ENCODE measurements at regions of chr3 and their contacts with region 1.

Region 1: DNA sequence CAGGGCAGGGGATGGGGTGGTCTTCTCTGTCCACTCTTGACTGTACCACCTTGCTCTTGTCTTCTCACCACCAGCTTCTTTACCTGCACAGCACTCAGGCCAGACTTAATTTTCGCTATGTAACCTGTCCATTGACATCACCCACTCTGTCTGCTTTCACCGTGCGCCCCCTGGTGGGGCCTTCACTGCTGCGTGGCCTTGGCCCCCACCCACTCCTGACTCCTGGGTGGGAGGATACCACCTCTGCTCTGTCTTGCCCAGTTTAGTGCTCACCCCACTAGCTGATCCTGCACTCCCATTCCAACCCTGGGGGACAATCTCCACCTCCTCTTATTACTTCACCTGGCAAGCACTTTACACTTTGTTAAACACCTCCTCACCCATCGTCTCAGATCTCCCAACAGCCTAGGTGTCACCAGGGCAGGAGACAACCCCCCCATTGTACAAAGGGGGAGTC is 17.7 kb downstream of the PTH1R start:
- DNase-seq: peak; percentile 84 to 86 (median 85)
- ATAC-seq: peak; percentile 92
- H3K4me3 ChIP-seq: no peak overlapping the region
- H3K27ac ChIP-seq: no peak overlapping the region
- H3K4me1 ChIP-seq: peaks cover 0 to 37% of the 10 kb centered on the region in 2 experiments; a peak in 3 of 5 replicates
- H3K27me3 ChIP-seq: peaks cover 20 to 62% of the 10 kb centered on the region in 2 experiments; a peak in 4 of 5 replicates
- CTCF ChIP-seq: peak; percentile 91 to 99 (median 93)
- EP300 ChIP-seq: no peak
- POLR2A ChIP-seq: no peak
- RAD21 ChIP-seq: peak; percentile 79 to 97

Region 2: GRCh38 chr3:46717447-46718231 is 177.6 kb before region 1 on chr3 and contains the start of gene PRSS50:
- CTCF ChIA-PET with region 1: interaction called, 3 read pairs
- POLR2A ChIA-PET with region 1: interaction called, 3 read pairs
- in situ Hi-C with region 1: loop called (anchors 5 kb)
- intact Hi-C with region 1: no loop called
- DNase-seq: peak; percentile 62 to 93 (median 87)
- ATAC-seq: peak; percentile 98
- H3K4me3 ChIP-seq: no peak within 1 kb of the TSS
- H3K27ac ChIP-seq: no peak within 1 kb of the TSS
- H3K4me1 ChIP-seq: peaks cover 0 to 10% of the 10 kb centered on the region in 2 experiments; a peak in 1 of 5 replicates
- H3K27me3 ChIP-seq: peaks cover 15 to 66% of the 10 kb centered on the region in 2 experiments
- CTCF ChIP-seq: peak; percentile 90 to 100 (median 99)
- EP300 ChIP-seq: no peak
- POLR2A ChIP-seq: no peak
- RAD21 ChIP-seq: peak in 1 of 2 experiments; percentile 51; a peak in 2 of 4 replicates
- polyA plus RNA-seq, gene PRSS50: 0.01 TPM in 1 of 2 experiments, not detected in the other

Region 3: GRCh38 chr3:46845791-46846623 is 49.2 kb before region 1 on chr3:
- CTCF ChIA-PET with region 1: interaction called, 3 read pairs
- POLR2A ChIA-PET with region 1: no interaction called
- in situ Hi-C with region 1: no loop called
- intact Hi-C with region 1: loop called (anchors 5 kb)
- DNase-seq: peak; percentile 67 to 94 (median 86)
- ATAC-seq: peak; percentile 92
- H3K4me3 ChIP-seq: peak overlapping the region; percentile 21; the same call in 1 of the 2 replicates
- H3K27ac ChIP-seq: no peak overlapping the region
- H3K4me1 ChIP-seq: peaks cover 11 to 17% of the 10 kb centered on the region in 2 experiments
- H3K27me3 ChIP-seq: peaks cover 5 to 38% of the 10 kb centered on the region in 2 experiments; a peak in 4 of 5 replicates
- CTCF ChIP-seq: peak; percentile 47 to 57 (median 52); a peak in 4 of 6 replicates
- EP300 ChIP-seq: no peak
- POLR2A ChIP-seq: no peak
- RAD21 ChIP-seq: peak; percentile 11 to 39; a peak in 2 of 4 replicates

Region 4: GRCh38 chr3:46866720-46867549 is 28.3 kb before region 1 on chr3:
- CTCF ChIA-PET with region 1: interaction called, 5 read pairs
- POLR2A ChIA-PET with region 1: no interaction called
- in situ Hi-C with region 1: no loop called
- intact Hi-C with region 1: loop called (anchors 1 kb)
- DNase-seq: peak; percentile 80 to 91 (median 86)
- ATAC-seq: peak; percentile 86
- H3K4me3 ChIP-seq: no peak overlapping the region
- H3K27ac ChIP-seq: no peak overlapping the region
- H3K4me1 ChIP-seq: peaks cover 0 to 15% of the 10 kb centered on the region in 2 experiments; a peak in 2 of 5 replicates
- H3K27me3 ChIP-seq: peaks cover 8 to 50% of the 10 kb centered on the region in 2 experiments; a peak in 4 of 5 replicates
- CTCF ChIP-seq: peak; percentile 95 to 96 (median 96)
- EP300 ChIP-seq: no peak
- POLR2A ChIP-seq: no peak
- RAD21 ChIP-seq: peak; percentile 76 to 89

Measured in K562 (cell line).